PC-9 (cell line): ENCODE measurements at regions of chr9 and their contacts with region 1.

Region 1: DNA sequence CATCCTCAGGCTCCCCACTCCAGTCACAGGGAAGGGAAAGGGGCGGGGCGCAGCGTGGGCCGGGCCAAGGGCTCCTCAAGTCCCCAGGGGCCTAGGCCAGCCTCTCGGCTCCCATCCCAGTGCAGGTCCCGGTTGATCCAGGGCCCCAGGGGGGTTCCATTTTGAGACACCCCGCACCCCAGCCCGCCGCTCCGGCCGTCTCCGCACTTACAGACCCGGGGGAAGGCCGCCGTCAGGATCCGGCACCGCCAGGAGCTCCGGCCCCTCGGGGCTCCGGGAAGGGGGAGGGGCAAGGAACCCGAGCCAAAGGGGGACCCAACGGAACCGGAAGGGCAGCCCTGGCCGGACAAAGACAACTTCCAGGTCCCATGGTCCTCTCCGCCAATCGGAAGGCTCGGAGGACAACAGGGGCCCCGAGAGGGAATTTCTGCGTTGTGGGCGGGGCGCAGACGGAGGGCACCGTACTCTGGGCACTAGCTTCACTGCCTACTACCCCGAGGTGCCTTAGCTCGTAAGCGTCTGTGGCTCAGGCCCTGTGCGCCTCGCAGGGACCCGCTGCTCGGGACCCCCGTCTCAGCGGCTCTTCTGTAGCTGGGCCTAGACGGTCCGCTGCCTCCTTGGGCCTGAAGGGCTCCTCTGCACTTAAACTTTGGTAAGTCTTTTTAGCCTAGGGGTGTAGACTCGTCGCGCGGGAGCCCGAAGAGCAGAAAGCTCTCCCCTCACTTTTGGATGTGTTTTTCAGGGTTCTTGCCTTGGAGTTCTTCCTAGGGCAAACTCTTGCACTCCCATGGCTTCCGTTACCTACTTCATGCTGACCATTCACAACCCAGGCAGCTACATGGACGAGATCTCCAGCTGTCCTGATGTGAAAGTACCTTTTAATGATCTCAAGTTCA is at the start of gene ZBTB26:
- DNase-seq: peak; percentile 90 to 96
- H3K4me3 ChIP-seq: peak within 1 kb of the TSS; percentile 76
- H3K27ac ChIP-seq: peak within 1 kb of the TSS; percentile 42
- H3K4me1 ChIP-seq: peaks cover 18% of the 10 kb centered on the region
- H3K27me3 ChIP-seq: no peaks in the 10 kb centered on the region
- CTCF ChIP-seq: no peak
- total RNA-seq, gene ZBTB26: 10.2 and 12.2 TPM in 2 replicates

Region 2: GRCh38 chr9:122307925-122308324 is 623.5 kb before region 1 on chr9:
- CTCF ChIA-PET with region 1: no interaction called
- POLR2A ChIA-PET with region 1: interaction called, 17 read pairs
- intact Hi-C with region 1: no loop called
- DNase-seq: no peak
- H3K4me3 ChIP-seq: no peak overlapping the region
- H3K27ac ChIP-seq: no peak overlapping the region
- H3K4me1 ChIP-seq: no peaks in the 10 kb centered on the region
- H3K27me3 ChIP-seq: no peaks in the 10 kb centered on the region
- CTCF ChIP-seq: no peak

Region 3: DNA sequence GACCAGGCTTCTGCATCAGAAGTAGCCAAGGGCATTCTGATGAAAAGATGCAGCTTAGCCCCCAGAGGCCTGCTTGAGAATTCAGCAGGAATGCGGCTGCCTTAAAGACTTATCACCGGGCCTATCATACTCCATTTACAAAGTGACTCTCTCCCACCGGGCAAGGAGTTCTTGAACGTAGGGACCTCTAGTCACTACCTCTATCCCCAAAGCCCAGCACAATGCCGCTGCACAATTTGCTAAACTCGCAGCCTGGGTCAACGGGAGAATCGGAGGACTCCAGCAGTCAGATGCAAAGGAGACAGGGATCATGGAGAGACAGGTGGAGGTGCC is 103.7 kb before region 1 on chr9:
- CTCF ChIA-PET with region 1: no interaction called
- POLR2A ChIA-PET with region 1: interaction called, 15 read pairs
- intact Hi-C with region 1: no loop called
- DNase-seq: no peak
- H3K4me3 ChIP-seq: peak overlapping the region; percentile 61
- H3K27ac ChIP-seq: peak overlapping the region; percentile 64
- H3K4me1 ChIP-seq: peaks cover 14% of the 10 kb centered on the region
- H3K27me3 ChIP-seq: no peaks in the 10 kb centered on the region
- CTCF ChIP-seq: no peak

Region 4: GRCh38 chr9:122904823-122905710 is 26.4 kb before region 1 on chr9 and contains the start of gene RC3H2:
- CTCF ChIA-PET with region 1: no interaction called
- POLR2A ChIA-PET with region 1: interaction called, 4 read pairs
- intact Hi-C with region 1: loop called (anchors 1 kb)
- DNase-seq: peak; percentile 98 to 99
- H3K4me3 ChIP-seq: peak within 1 kb of the TSS; percentile 100
- H3K27ac ChIP-seq: peak within 1 kb of the TSS; percentile 80
- H3K4me1 ChIP-seq: peaks cover 19% of the 10 kb centered on the region
- H3K27me3 ChIP-seq: no peaks in the 10 kb centered on the region
- CTCF ChIP-seq: no peak
- total RNA-seq, gene RC3H2: 58.8 and 59.3 TPM in 2 replicates

Region 5: GRCh38 chr9:122912964-122913673 is 18.4 kb before region 1 on chr9 and contains the start of gene ZBTB6:
- CTCF ChIA-PET with region 1: interaction called, 3 read pairs
- POLR2A ChIA-PET with region 1: interaction called, 3 read pairs
- intact Hi-C with region 1: loop called (anchors 1 kb)
- DNase-seq: peak; percentile 77 to 78
- H3K4me3 ChIP-seq: peak within 1 kb of the TSS; percentile 74
- H3K27ac ChIP-seq: peak within 1 kb of the TSS; percentile 76
- H3K4me1 ChIP-seq: peaks cover 11% of the 10 kb centered on the region
- H3K27me3 ChIP-seq: no peaks in the 10 kb centered on the region
- CTCF ChIP-seq: no peak
- total RNA-seq, gene ZBTB6: 7.7 and 8.7 TPM in 2 replicates